GM12878 (cell line): ENCODE measurements at regions of chr7 and their contacts with region 1.

Region 1: DNA sequence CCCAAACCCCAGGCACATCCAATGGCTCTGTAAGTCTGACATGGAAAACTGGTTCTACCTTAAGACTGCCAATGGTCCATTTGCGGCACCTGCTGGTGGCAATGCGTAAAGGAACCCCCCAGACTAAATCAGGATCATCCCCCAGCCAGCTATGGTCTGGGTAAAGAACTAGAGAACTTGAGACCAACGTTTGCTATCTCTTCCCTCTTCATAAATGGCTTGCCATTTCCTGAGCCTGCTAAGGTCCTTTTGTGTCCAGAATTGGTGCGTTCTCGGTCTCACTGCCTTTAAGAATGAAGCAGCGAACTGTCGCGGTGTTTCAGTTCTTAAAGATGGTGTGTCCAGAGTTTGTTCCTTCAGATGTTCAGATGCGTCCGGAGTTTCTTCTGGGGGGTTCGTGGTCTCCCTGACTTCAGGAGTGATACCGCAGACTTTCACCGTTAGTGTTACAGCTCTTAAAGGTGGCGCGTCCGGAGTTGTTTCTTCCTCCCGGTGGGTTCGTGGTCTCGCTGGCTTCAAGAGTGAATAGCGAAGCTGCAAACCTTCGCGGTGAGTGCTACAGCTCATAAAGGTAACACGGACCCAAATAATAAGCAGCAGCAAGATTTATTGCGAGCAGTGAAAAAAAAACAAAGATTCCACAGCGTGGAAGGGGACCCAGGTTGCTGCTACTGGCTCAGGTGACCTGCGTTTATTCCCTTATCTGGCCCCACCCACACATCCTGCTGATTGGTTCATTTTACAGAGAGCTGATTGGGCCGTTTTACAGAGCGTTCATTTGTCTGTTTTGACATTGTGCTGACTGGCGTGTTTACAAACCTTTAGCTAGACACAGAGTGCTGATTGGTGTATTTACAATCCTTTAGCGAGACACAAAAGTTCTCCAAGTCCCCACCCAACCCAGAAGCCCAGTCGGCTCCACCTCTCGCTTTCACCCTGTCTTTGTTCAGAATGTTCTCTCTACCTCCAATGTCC is 95.4 kb downstream of the ELMO1 start:
- DNase-seq: no peak
- ATAC-seq: peak; percentile 89
- H3K4me3 ChIP-seq: peak overlapping the region; percentile 72
- H3K27ac ChIP-seq: peak overlapping the region; percentile 52; the same call in 1 of the 2 replicates
- H3K4me1 ChIP-seq: peaks cover 17% of the 10 kb centered on the region
- H3K27me3 ChIP-seq: no peaks in the 10 kb centered on the region
- CTCF ChIP-seq: peak; percentile 94 to 98 (median 97)
- EP300 ChIP-seq: no peak
- POLR2A ChIP-seq: no peak
- RAD21 ChIP-seq: peak; percentile 97

Region 2: DNA sequence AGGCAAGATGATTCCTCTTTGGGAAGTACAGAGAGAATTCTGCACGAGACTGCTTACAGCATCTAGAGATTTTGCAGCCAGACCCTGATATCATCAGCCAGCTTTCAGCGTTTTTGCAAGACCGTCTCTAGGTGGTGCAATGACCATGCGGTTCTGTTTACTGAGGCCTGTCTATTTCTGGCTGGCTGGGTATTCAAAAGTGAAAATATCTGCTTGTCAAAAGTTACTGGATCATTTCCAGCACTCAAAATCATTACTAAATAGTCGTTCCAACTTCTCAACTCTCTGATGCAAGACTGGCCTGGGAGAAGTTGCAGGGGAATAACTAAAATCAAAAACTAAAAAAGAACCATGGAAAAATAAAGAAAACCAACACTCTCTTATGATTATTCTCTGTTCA is 144.7 kb before region 1 on chr7:
- CTCF ChIA-PET with region 1: interaction called, 59 read pairs
- POLR2A ChIA-PET with region 1: interaction called, 3 read pairs
- RAD21 ChIA-PET with region 1: interaction called, 26 read pairs
- SMC1A ChIA-PET with region 1: interaction called, 39 read pairs
- in situ Hi-C with region 1: loop called (anchors 10 kb)
- intact Hi-C with region 1: loop called (anchors 1 kb)
- DNase-seq: peak; percentile 26
- ATAC-seq: peak; percentile 92
- H3K4me3 ChIP-seq: no peak overlapping the region
- H3K27ac ChIP-seq: no peak overlapping the region
- H3K4me1 ChIP-seq: peaks cover 19% of the 10 kb centered on the region
- H3K27me3 ChIP-seq: no peaks in the 10 kb centered on the region; a peak in 1 of 4 replicates
- CTCF ChIP-seq: peak; percentile 60 to 90 (median 69); a peak in 5 of 6 replicates
- EP300 ChIP-seq: no peak
- POLR2A ChIP-seq: no peak
- RAD21 ChIP-seq: peak; percentile 87

Region 3: GRCh38 chr7:37234928-37235327 is 118.3 kb before region 1 on chr7:
- CTCF ChIA-PET with region 1: interaction called, 75 read pairs
- POLR2A ChIA-PET with region 1: no interaction called
- RAD21 ChIA-PET with region 1: interaction called, 44 read pairs
- SMC1A ChIA-PET with region 1: interaction called, 51 read pairs
- in situ Hi-C with region 1: loop called (anchors 10 kb)
- intact Hi-C with region 1: loop called (anchors 1 kb)
- DNase-seq: no peak
- ATAC-seq: peak; percentile 46; the same call in 1 of the 3 replicates
- H3K4me3 ChIP-seq: no peak overlapping the region
- H3K27ac ChIP-seq: no peak overlapping the region
- H3K4me1 ChIP-seq: no peaks in the 10 kb centered on the region
- H3K27me3 ChIP-seq: no peaks in the 10 kb centered on the region
- CTCF ChIP-seq: peak; percentile 52 to 57 (median 52); a peak in 4 of 6 replicates
- EP300 ChIP-seq: no peak
- POLR2A ChIP-seq: no peak
- RAD21 ChIP-seq: peak; percentile 69

Region 4: DNA sequence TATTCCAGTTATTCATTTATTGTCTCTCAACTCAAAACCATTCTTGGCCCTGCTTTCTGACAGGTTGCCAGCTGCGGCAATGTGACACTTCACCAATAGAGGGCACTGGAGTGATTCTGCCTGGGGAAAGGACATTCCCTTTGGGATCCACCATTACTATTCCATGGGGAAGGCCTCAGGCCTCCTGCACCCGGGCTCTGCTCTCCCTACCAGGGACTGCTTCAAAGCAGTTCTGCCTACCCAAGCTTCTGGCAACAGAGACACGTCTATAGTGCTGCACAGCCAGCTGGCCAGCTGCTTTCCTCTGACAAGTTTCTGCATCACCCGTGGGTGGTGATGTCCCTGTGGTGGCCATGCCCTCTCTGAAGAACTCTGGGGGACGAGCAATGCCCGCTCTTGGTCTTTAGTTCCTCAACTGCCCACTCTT is 68.4 kb before region 1 on chr7:
- CTCF ChIA-PET with region 1: interaction called, 298 read pairs
- POLR2A ChIA-PET with region 1: interaction called, 3 read pairs
- RAD21 ChIA-PET with region 1: interaction called, 100 read pairs
- SMC1A ChIA-PET with region 1: interaction called, 122 read pairs
- in situ Hi-C with region 1: no loop called
- intact Hi-C with region 1: loop called (anchors 1 kb)
- DNase-seq: peak; percentile 9
- ATAC-seq: peak; percentile 70
- H3K4me3 ChIP-seq: no peak overlapping the region
- H3K27ac ChIP-seq: no peak overlapping the region
- H3K4me1 ChIP-seq: peaks cover 11% of the 10 kb centered on the region
- H3K27me3 ChIP-seq: no peaks in the 10 kb centered on the region
- CTCF ChIP-seq: peak; percentile 87 to 92 (median 87)
- EP300 ChIP-seq: no peak
- POLR2A ChIP-seq: no peak
- RAD21 ChIP-seq: peak; percentile 86

Region 5: DNA sequence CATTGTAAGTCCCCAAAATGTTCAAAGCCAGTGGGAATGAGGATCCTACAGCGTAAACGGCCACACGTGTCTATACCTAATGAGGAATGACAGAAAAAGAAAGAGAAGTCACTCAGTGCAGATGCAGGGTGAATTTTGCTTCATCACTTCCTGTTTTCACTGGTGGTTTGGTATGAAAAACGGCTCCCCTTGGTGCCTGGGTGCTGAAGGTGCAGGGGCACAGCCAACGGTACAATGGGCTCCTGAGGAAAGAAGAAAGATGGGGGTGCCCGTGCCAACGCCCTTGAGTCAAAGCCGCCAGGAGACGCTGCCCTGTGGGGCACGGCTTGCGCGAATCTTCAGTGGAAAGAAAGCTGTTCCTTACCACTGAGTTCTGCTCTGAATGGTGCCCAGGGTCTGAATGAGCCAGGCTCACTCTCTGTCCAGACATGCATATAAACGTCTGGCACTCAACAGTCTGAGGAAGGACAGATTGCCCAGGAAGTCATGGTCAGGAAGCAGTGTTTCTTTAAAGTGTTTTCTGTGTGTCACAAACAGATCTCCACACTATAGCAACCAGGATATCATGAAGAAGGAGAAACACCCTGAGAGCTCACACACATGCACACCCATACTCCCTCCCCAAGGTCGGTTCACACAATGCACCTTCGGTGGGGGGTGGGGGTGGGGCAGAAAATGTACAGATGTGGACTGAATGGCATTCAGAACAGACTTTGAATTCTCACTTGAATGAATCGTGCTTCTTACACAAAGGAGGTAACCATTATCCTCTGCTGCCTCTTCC is 10.4 kb before region 1 on chr7:
- CTCF ChIA-PET with region 1: interaction called, 64 read pairs
- POLR2A ChIA-PET with region 1: interaction called, 5 read pairs
- RAD21 ChIA-PET with region 1: interaction called, 32 read pairs
- SMC1A ChIA-PET with region 1: interaction called, 17 read pairs
- in situ Hi-C with region 1: no loop called
- intact Hi-C with region 1: no loop called
- DNase-seq: peak; percentile 69
- ATAC-seq: peak; percentile 70
- H3K4me3 ChIP-seq: peak overlapping the region; percentile 69
- H3K27ac ChIP-seq: peak overlapping the region; percentile 85
- H3K4me1 ChIP-seq: peaks cover 31% of the 10 kb centered on the region
- H3K27me3 ChIP-seq: no peaks in the 10 kb centered on the region
- CTCF ChIP-seq: peak; percentile 19 to 58 (median 41); a peak in 5 of 6 replicates
- EP300 ChIP-seq: no peak
- POLR2A ChIP-seq: peak; percentile 58; the same call in 1 of the 2 replicates
- RAD21 ChIP-seq: peak; percentile 57

Region 6: DNA sequence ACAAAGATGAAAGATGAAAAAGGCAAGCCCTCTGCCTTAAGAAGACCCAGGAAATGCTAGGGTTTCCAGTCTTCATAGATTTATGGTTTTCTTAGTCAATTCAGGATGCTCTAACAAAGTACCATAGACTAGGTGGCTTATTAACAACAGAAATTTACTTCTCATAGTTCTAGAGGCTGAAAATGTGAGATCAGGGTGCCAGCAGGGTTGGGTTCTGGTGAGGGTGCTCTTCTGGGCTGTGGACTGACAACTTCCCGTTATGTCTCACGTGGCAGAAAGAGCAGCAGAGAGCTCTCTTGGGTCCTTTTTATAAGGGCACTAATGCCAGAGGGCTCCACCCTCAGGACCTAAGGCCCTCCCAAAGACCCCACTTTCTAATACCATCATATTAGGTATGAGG is 71.7 kb after region 1 on chr7:
- CTCF ChIA-PET with region 1: no interaction called
- POLR2A ChIA-PET with region 1: no interaction called
- RAD21 ChIA-PET with region 1: no interaction called
- SMC1A ChIA-PET with region 1: no interaction called
- in situ Hi-C with region 1: no loop called
- intact Hi-C with region 1: no loop called
- DNase-seq: no peak
- ATAC-seq: no peak
- H3K4me3 ChIP-seq: no peak overlapping the region
- H3K27ac ChIP-seq: no peak overlapping the region
- H3K4me1 ChIP-seq: no peaks in the 10 kb centered on the region
- H3K27me3 ChIP-seq: no peaks in the 10 kb centered on the region; a peak in 1 of 4 replicates
- CTCF ChIP-seq: no peak
- EP300 ChIP-seq: no peak
- POLR2A ChIP-seq: no peak
- RAD21 ChIP-seq: no peak

Region 7: DNA sequence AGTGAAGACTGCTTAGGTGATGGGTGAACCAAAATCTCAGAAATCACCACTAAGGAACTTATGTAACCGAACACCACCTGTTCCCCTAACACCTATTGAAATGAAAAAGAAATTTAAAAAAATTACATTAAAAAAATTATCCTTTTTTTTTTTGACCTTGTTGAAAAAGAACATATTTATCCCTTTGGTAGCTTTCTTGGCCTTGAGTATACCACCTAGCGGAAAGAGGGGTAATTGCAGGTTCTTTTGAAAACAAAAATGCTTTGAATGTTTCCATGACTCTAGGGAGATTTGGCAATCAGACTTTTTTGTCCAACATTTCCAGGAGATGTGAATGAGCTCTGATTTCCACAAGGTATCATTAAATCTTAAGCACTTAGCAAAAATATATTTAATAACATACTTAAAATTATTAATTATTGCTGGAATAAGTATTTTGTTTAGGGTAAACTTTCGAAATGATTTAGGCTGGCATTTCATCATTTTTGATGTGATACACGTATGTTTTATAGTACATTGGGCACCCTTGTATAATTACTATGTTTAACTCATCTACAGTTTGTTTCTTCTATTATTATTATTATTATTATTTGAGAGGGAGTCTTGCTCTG is 142.4 kb after region 1 on chr7:
- CTCF ChIA-PET with region 1: interaction called, 15 read pairs
- POLR2A ChIA-PET with region 1: no interaction called
- RAD21 ChIA-PET with region 1: interaction called, 20 read pairs
- SMC1A ChIA-PET with region 1: interaction called, 5 read pairs
- in situ Hi-C with region 1: no loop called
- intact Hi-C with region 1: loop called (anchors 5 kb)
- DNase-seq: no peak
- ATAC-seq: peak; percentile 58; the same call in 1 of the 3 replicates
- H3K4me3 ChIP-seq: no peak overlapping the region
- H3K27ac ChIP-seq: no peak overlapping the region
- H3K4me1 ChIP-seq: peaks cover 8% of the 10 kb centered on the region; the same call in 1 of the 2 replicates
- H3K27me3 ChIP-seq: no peaks in the 10 kb centered on the region
- CTCF ChIP-seq: peak; percentile 55 to 72 (median 62)
- EP300 ChIP-seq: no peak
- POLR2A ChIP-seq: no peak
- RAD21 ChIP-seq: peak; percentile 57